Activated naive CD4-positive, alpha-beta T cell treated with anti-CD3 and anti-CD28 coated beads for 36 hours (primary cell): ENCODE measurements at regions of chr9 and their contacts with region 1.

Region 1: DNA sequence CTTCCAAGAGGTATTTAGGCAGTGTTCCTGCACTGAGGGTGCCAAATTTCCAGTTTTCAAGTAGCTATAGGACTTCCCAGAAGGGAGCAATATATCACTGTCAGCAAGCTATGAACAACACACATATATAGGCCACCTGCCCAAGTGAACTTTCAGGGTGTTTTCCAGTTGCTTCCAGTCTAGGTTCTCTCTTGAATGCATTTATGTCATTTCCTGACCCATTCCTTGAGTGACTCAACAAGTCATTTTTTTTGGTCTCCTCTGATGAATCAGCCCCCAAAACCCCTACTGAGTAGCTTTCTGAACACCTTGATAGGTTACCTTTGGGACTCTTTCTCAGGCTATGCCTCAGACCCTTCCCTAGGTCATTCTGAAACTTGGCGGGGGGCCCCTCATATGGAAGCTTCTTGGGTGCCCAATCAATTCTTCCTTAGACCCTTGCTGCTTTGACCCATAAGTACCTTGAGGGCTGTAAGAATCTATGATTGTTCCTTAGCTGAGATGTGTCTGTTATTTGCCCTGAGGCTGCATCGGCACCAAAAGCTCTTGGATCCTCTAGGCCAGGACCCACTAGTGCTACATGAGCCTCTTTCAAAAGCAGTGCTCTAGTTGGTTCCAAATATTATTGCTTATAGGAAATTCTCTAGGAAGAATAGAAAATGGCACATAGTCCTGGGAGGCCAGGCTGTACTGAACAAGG is 12.4 kb downstream of the DNAJB5 start:
- DNase-seq: peak; percentile 70
- H3K4me3 Mint-ChIP-seq: no peak overlapping the region
- H3K27ac Mint-ChIP-seq: peak overlapping the region; percentile 83
- H3K4me1 Mint-ChIP-seq: peaks cover 35% of the 10 kb centered on the region
- H3K27me3 Mint-ChIP-seq: no peaks in the 10 kb centered on the region

Region 2: GRCh38 chr9:35035851-35036701 is 34.1 kb after region 1 on chr9:
- CTCF ChIA-PET with region 1: no interaction called
- intact Hi-C with region 1: loop called (anchors 1 kb)
- DNase-seq: peak; percentile 70
- H3K4me3 Mint-ChIP-seq: peak overlapping the region; percentile 37
- H3K27ac Mint-ChIP-seq: peak overlapping the region; percentile 31
- H3K4me1 Mint-ChIP-seq: peaks cover 8% of the 10 kb centered on the region
- H3K27me3 Mint-ChIP-seq: no peaks in the 10 kb centered on the region

Region 3: DNA sequence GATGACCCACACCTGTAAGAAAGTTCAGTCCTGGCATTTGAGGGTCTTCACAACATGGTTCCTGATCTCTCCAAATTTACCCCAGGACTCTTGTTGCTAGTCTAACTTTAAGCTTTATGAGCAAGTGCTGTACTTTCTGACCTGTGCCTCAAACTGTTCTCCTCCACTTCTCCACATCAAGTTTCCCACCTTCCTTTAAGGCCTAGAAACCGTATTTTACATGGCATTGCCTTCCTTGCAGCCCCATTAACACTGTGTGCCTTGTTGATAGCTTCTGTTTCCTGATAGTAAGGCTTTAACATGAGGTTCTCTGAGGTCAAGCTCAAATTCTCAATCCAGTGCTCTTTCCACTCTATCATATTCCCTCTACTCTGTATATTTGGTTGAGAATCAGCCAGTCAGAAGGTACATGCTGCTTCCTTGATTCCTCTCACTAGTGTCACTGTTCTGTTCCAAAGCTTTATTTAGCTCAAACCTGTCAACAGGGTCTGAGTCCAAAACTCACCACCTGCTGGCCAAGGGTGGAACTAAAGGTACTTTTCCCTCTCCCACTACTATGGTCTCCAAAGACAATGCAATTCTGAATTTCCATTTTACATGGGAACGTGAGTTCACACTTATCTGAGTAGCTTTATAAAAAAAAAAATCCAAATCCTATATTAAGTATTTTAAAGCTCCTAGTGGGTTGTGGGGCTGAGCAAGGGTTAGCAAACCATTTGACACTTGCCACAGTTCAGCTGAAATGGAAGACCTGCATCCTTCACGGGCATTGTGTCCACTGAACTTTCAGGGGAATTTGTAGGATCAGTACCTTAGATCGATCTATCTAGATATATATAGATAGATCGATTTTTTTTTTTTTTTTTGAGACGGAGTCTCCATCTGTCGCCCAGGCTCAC is 49.4 kb after region 1 on chr9:
- CTCF ChIA-PET with region 1: interaction called, 26 read pairs
- intact Hi-C with region 1: loop called (anchors 1 kb)
- DNase-seq: peak; percentile 71
- H3K4me3 Mint-ChIP-seq: no peak overlapping the region
- H3K27ac Mint-ChIP-seq: no peak overlapping the region
- H3K4me1 Mint-ChIP-seq: no peaks in the 10 kb centered on the region
- H3K27me3 Mint-ChIP-seq: no peaks in the 10 kb centered on the region

Region 4: GRCh38 chr9:35071814-35072460 is 70.0 kb after region 1 on chr9:
- CTCF ChIA-PET with region 1: interaction called, 3 read pairs
- intact Hi-C with region 1: loop called (anchors 1 kb)
- DNase-seq: peak; percentile 77
- H3K4me3 Mint-ChIP-seq: peak overlapping the region; percentile 92
- H3K27ac Mint-ChIP-seq: peak overlapping the region; percentile 96
- H3K4me1 Mint-ChIP-seq: peaks cover 57% of the 10 kb centered on the region
- H3K27me3 Mint-ChIP-seq: no peaks in the 10 kb centered on the region

Region 5: DNA sequence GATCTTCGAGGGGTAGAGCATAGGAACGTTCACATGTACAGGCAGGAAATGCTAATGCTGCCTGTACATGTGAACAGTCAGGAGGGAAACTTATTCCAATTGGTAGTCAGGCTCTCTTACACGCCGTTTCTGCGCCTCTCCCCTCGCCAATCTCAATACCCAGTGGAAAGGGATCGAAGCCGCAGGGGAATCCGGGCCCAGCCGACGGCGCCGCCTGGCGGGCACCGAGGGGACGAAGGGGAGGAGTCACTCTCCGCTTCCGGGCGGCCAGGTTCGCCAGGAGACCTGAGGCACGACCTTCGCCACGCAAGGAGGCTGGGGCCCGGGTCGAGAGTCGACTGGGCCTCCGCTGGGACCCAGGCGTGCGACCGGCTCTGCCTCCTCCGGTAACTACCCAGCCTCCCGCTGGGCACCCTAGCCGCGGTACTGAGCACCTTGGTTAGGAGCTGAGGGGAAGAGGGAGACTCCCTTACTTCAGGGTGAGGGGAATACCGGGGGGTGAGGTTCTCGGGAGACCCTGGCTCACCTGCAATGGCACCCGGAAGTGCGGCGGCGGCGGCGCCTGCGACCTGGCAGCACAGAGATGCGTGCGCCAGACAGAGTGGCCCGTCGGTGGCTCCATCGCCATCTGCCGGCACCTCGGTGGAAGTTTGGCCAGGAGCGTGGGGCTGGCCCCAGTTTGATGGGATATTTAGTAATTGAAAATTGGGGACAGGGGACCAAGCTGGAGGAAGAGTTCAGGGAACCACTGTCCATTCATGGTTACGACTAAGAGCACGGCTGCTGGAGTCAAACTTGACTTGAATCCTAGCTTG is 94.3 kb after region 1 on chr9 and contains the start of gene PIGO:
- CTCF ChIA-PET with region 1: no interaction called
- intact Hi-C with region 1: loop called (anchors 1 kb)
- DNase-seq: peak; percentile 92
- H3K4me3 Mint-ChIP-seq: peak within 1 kb of the TSS; percentile 83
- H3K27ac Mint-ChIP-seq: peak within 1 kb of the TSS; percentile 91
- H3K4me1 Mint-ChIP-seq: peaks cover 37% of the 10 kb centered on the region
- H3K27me3 Mint-ChIP-seq: no peaks in the 10 kb centered on the region
- total RNA-seq, gene PIGO: 22.8 to 23.7 TPM

Region 6: GRCh38 chr9:35111001-35111933 is 109.3 kb after region 1 on chr9:
- CTCF ChIA-PET with region 1: no interaction called
- intact Hi-C with region 1: loop called (anchors 1 kb)
- DNase-seq: peak; percentile 97
- H3K4me3 Mint-ChIP-seq: peak overlapping the region; percentile 56
- H3K27ac Mint-ChIP-seq: peak overlapping the region; percentile 88
- H3K4me1 Mint-ChIP-seq: peaks cover 44% of the 10 kb centered on the region
- H3K27me3 Mint-ChIP-seq: no peaks in the 10 kb centered on the region

Region 7: DNA sequence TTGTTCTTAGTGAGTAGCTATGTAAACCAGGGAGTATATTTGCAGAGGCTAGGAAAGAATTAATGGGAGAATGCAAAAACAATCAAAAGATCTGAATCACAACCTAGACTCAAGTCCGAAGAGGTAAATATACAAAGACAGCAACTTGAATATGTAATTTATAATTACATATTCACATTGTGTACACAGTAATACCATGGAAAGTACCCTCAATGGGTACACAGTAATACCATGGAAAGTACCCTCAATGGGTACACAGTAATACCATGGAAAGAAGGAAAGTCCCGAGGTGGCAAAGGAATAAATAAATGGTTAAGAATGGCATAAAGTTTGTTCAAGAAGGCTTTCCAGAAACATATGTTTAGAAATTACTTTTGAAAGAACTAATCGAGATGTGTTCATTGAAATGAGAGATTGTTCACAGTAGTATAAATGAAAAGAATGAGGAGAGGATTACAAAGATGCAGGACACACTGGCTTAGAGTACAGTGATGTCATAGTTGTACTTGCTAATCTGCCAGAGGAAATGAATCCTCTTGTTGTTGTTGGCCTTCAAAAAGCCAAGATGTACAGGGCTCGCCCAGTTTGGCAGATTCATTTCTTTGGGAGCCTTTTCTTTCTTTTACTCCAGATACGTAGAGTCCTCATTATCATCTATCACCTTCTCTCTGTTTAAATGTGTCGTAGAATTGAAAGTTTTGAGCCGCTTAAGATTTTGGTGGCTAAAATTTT is 275.8 kb after region 1 on chr9:
- CTCF ChIA-PET with region 1: no interaction called
- intact Hi-C with region 1: loop called (anchors 5 kb)
- DNase-seq: no peak
- H3K4me3 Mint-ChIP-seq: no peak overlapping the region
- H3K27ac Mint-ChIP-seq: no peak overlapping the region
- H3K4me1 Mint-ChIP-seq: peaks cover 30% of the 10 kb centered on the region
- H3K27me3 Mint-ChIP-seq: peaks cover 3% of the 10 kb centered on the region

Region 8: GRCh38 chr9:35705836-35706430 is 704.0 kb after region 1 on chr9:
- CTCF ChIA-PET with region 1: no interaction called
- intact Hi-C with region 1: no loop called
- DNase-seq: no peak
- H3K4me3 Mint-ChIP-seq: no peak overlapping the region
- H3K27ac Mint-ChIP-seq: no peak overlapping the region
- H3K4me1 Mint-ChIP-seq: no peaks in the 10 kb centered on the region
- H3K27me3 Mint-ChIP-seq: no peaks in the 10 kb centered on the region